ENCODE measurements at regions of chr17 and their contacts with region 1.

Region 1: GRCh38 chr17:7280519-7281429 is 744 bp upstream of the SLC2A4 start:
- DNase-seq: peak; percentile 76 to 92 (median 86)
- ATAC-seq: peak; percentile 88
- H3K4me3 ChIP-seq: peak overlapping the region; percentile 41 to 46
- H3K4me3 Mint-ChIP-seq: peak overlapping the region; percentile 73
- H3K27ac ChIP-seq: no peak overlapping the region
- H3K27ac Mint-ChIP-seq: no peak overlapping the region
- H3K4me1 ChIP-seq: peaks cover 25% of the 10 kb centered on the region
- H3K4me1 Mint-ChIP-seq: peaks cover 16% of the 10 kb centered on the region
- H3K27me3 ChIP-seq: peaks cover 0 to 26% of the 10 kb centered on the region in 2 experiments
- H3K27me3 Mint-ChIP-seq: peaks cover 9% of the 10 kb centered on the region
- CTCF ChIP-seq: peak; percentile 84

Region 2: DNA sequence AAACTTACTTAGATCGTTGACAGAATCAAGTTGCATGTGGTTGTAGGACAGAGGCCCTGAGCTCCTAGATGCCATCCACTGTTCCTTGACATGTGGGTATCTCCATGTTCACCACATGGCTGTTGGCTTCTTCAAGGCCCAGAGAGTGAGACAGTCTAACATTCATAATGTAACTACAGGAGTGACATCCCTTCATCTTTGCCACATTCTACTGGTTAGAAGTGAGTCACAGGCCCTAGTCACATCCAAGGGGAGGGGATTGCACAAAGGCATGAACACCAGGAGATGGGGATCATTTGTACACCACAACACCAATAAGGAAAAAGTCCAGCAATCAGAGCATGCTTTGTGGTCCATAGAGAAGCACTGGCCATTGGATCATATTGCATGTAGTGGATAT is 1154.0 kb before region 1 on chr17:
- CTCF ChIA-PET with region 1: no interaction called
- POLR2A ChIA-PET with region 1: no interaction called
- intact Hi-C with region 1: no loop called
- DNase-seq: peak in 1 of 9 experiments; percentile 17
- ATAC-seq: no peak
- H3K4me3 ChIP-seq: no peak overlapping the region
- H3K4me3 Mint-ChIP-seq: no peak overlapping the region
- H3K27ac ChIP-seq: no peak overlapping the region
- H3K27ac Mint-ChIP-seq: no peak overlapping the region
- H3K4me1 ChIP-seq: no peaks in the 10 kb centered on the region
- H3K4me1 Mint-ChIP-seq: no peaks in the 10 kb centered on the region
- H3K27me3 ChIP-seq: no peaks in the 10 kb centered on the region
- H3K27me3 Mint-ChIP-seq: peaks cover 7% of the 10 kb centered on the region
- CTCF ChIP-seq: no peak

Region 3: GRCh38 chr17:7239091-7240027 is 41.4 kb before region 1 on chr17 and contains the start of gene PHF23:
- CTCF ChIA-PET with region 1: no interaction called
- POLR2A ChIA-PET with region 1: no interaction called
- intact Hi-C with region 1: no loop called
- DNase-seq: peak; percentile 93 to 99 (median 97)
- ATAC-seq: peak; percentile 64
- H3K4me3 ChIP-seq: peak within 1 kb of the TSS; percentile 87 to 90
- H3K4me3 Mint-ChIP-seq: peak within 1 kb of the TSS; percentile 98
- H3K27ac ChIP-seq: peak within 1 kb of the TSS; percentile 64 to 100
- H3K27ac Mint-ChIP-seq: peak within 1 kb of the TSS; percentile 90
- H3K4me1 ChIP-seq: peaks cover 37% of the 10 kb centered on the region
- H3K4me1 Mint-ChIP-seq: peaks cover 58% of the 10 kb centered on the region
- H3K27me3 ChIP-seq: no peaks in the 10 kb centered on the region
- H3K27me3 Mint-ChIP-seq: no peaks in the 10 kb centered on the region
- CTCF ChIP-seq: no peak
- total RNA-seq, gene PHF23: 2.8 to 3.1 TPM

Region 4: GRCh38 chr17:7261172-7261927 is 19.4 kb before region 1 on chr17:
- CTCF ChIA-PET with region 1: interaction called, 10 read pairs
- POLR2A ChIA-PET with region 1: no interaction called
- intact Hi-C with region 1: loop called in 1 of 2 experiments (anchors 2 kb)
- DNase-seq: peak in 6 of 9 experiments; percentile 40 to 71 (median 52)
- ATAC-seq: peak; percentile 57
- H3K4me3 ChIP-seq: peak overlapping the region; percentile 45 to 61
- H3K4me3 Mint-ChIP-seq: peak overlapping the region; percentile 80
- H3K27ac ChIP-seq: peak overlapping the region; percentile 31 to 59
- H3K27ac Mint-ChIP-seq: peak overlapping the region; percentile 90
- H3K4me1 ChIP-seq: peaks cover 34% of the 10 kb centered on the region
- H3K4me1 Mint-ChIP-seq: peaks cover 28% of the 10 kb centered on the region
- H3K27me3 ChIP-seq: peaks cover 0 to 11% of the 10 kb centered on the region in 2 experiments
- H3K27me3 Mint-ChIP-seq: no peaks in the 10 kb centered on the region
- CTCF ChIP-seq: no peak

Region 5: DNA sequence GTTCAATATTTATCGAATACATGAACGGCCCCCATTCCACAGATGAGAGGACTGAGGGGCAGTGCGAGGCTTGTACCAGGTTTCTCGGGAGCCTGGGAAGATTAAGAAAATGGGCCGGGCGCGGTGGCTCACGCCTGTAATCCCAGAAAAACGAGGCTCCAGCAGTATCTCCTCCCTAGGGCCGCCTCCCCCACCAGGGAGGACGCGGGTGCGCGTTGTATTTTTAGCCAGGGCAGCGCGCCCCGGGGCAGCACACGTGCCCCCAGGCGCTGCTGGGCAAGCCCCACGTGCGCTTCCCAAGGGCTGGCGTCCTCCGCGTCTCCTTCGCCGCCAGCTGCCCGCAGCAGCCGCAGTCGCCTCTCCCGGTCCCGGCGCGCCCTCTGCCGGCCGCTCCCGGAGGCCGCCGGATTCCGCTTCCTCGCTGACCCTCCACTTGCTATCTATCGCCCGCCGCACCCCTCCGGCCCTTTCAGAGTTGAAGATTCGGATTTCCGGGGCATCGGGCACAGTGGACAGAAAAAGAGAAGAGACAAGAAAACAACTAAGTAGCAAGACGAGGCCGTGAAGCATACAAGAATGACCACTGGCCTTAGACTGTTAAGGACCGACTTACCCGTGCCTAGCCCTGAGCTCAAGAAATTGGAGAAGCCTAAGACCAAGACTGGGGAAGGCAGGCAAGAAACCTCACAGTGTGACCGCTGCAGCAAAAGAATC is 15.6 kb after region 1 on chr17:
- CTCF ChIA-PET with region 1: interaction called, 80 read pairs
- POLR2A ChIA-PET with region 1: interaction called, 8 read pairs
- intact Hi-C with region 1: loop called (anchors 1 kb)
- DNase-seq: peak in 7 of 9 experiments; percentile 54 to 82 (median 75)
- ATAC-seq: no peak
- H3K4me3 ChIP-seq: no peak overlapping the region
- H3K4me3 Mint-ChIP-seq: peak overlapping the region; percentile 75
- H3K27ac ChIP-seq: no peak overlapping the region
- H3K27ac Mint-ChIP-seq: no peak overlapping the region
- H3K4me1 ChIP-seq: peaks cover 25% of the 10 kb centered on the region
- H3K4me1 Mint-ChIP-seq: peaks cover 19% of the 10 kb centered on the region
- H3K27me3 ChIP-seq: peaks cover 0 to 15% of the 10 kb centered on the region in 2 experiments
- H3K27me3 Mint-ChIP-seq: peaks cover 9% of the 10 kb centered on the region
- CTCF ChIP-seq: peak; percentile 89

Region 6: GRCh38 chr17:7323731-7324437 is 43.1 kb after region 1 on chr17:
- CTCF ChIA-PET with region 1: interaction called, 4 read pairs
- POLR2A ChIA-PET with region 1: no interaction called
- intact Hi-C with region 1: loop called in 1 of 2 experiments (anchors 1 kb)
- DNase-seq: peak; percentile 38 to 83 (median 71)
- ATAC-seq: peak; percentile 56
- H3K4me3 ChIP-seq: no peak overlapping the region
- H3K4me3 Mint-ChIP-seq: no peak overlapping the region
- H3K27ac ChIP-seq: no peak overlapping the region
- H3K27ac Mint-ChIP-seq: no peak overlapping the region
- H3K4me1 ChIP-seq: peaks cover 14% of the 10 kb centered on the region
- H3K4me1 Mint-ChIP-seq: peaks cover 14% of the 10 kb centered on the region
- H3K27me3 ChIP-seq: no peaks in the 10 kb centered on the region
- H3K27me3 Mint-ChIP-seq: no peaks in the 10 kb centered on the region
- CTCF ChIP-seq: peak; percentile 86

Measured in CD8-positive, alpha-beta T cell (primary cell).